T-cell (primary cell): ENCODE measurements at regions of chr20 and their contacts with region 1.

Region 1: GRCh38 chr20:43460172-43460829 is 2.6 kb downstream of the SRSF6 start:
- DNase-seq: no peak
- ATAC-seq: no peak
- H3K4me3 ChIP-seq: no peak overlapping the region
- H3K4me3 Mint-ChIP-seq: peak overlapping the region; percentile 34 to 97 (median 35)
- H3K27ac ChIP-seq: no peak overlapping the region
- H3K27ac Mint-ChIP-seq: peak overlapping the region in 1 of 2 donors; percentile 66
- H3K4me1 ChIP-seq: peaks cover 18% of the 10 kb centered on the region in 2 experiments
- H3K4me1 Mint-ChIP-seq: peaks cover 53 to 55% (median 54%) of the 10 kb centered on the region in 3 donors
- H3K27me3 ChIP-seq: peaks cover 0 to 11% of the 10 kb centered on the region in 2 experiments
- H3K27me3 Mint-ChIP-seq: peaks cover 0 to under 1% of the 10 kb centered on the region in 2 donors

Region 2: DNA sequence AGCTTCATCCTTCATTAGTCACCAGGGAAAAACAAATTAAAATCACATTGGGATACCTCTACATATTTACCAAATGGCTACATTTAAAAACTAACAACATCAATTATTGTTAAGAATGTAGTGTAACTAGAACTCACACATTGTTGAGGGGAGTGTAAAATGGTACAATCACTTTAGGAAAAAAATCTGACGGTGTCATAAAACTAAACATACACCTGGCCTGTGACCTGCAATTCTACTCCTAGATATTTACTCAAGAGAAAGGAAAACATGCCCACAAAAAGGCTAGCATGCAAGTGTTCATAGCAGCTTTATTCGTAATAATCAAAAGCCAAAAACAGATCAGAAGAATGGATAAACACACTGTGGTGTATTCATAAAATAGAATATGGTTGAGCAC is 35.9 kb before region 1 on chr20:
- CTCF ChIA-PET with region 1: no interaction called
- POLR2A ChIA-PET with region 1: no interaction called
- DNase-seq: no peak
- ATAC-seq: no peak
- H3K4me3 ChIP-seq: no peak overlapping the region
- H3K4me3 Mint-ChIP-seq: no peak overlapping the region
- H3K27ac ChIP-seq: no peak overlapping the region
- H3K27ac Mint-ChIP-seq: no peak overlapping the region
- H3K4me1 ChIP-seq: no peaks in the 10 kb centered on the region
- H3K4me1 Mint-ChIP-seq: no peaks in the 10 kb centered on the region
- H3K27me3 ChIP-seq: peaks cover 0 to 13% of the 10 kb centered on the region in 2 experiments
- H3K27me3 Mint-ChIP-seq: peaks cover 21 to 25% of the 10 kb centered on the region in 2 donors

Region 3: GRCh38 chr20:43941476-43942200 is 481.3 kb after region 1 on chr20:
- CTCF ChIA-PET with region 1: no interaction called
- POLR2A ChIA-PET with region 1: interaction called in 1 of 2 experiments, 18 read pairs
- DNase-seq: no peak
- ATAC-seq: no peak
- H3K4me3 ChIP-seq: no peak overlapping the region
- H3K4me3 Mint-ChIP-seq: peak overlapping the region in 1 of 3 donors; percentile 30
- H3K27ac ChIP-seq: no peak overlapping the region
- H3K27ac Mint-ChIP-seq: peak overlapping the region; percentile 49 to 88
- H3K4me1 ChIP-seq: peaks cover 71 to 80% of the 10 kb centered on the region in 2 experiments
- H3K4me1 Mint-ChIP-seq: peaks cover 64 to 75% (median 68%) of the 10 kb centered on the region in 3 donors
- H3K27me3 ChIP-seq: peaks cover 0 to 18% of the 10 kb centered on the region in 2 experiments
- H3K27me3 Mint-ChIP-seq: peaks cover 3 to 6% of the 10 kb centered on the region in 2 donors

Region 4: GRCh38 chr20:44431502-44432234 is 971.4 kb after region 1 on chr20:
- CTCF ChIA-PET with region 1: no interaction called
- POLR2A ChIA-PET with region 1: interaction called in 1 of 2 experiments, 12 read pairs
- DNase-seq: no peak
- ATAC-seq: no peak
- H3K4me3 ChIP-seq: no peak overlapping the region
- H3K4me3 Mint-ChIP-seq: no peak overlapping the region
- H3K27ac ChIP-seq: no peak overlapping the region
- H3K27ac Mint-ChIP-seq: no peak overlapping the region
- H3K4me1 ChIP-seq: no peaks in the 10 kb centered on the region
- H3K4me1 Mint-ChIP-seq: no peaks in the 10 kb centered on the region
- H3K27me3 ChIP-seq: peaks cover 0 to 22% of the 10 kb centered on the region in 2 experiments
- H3K27me3 Mint-ChIP-seq: peaks cover 3 to 8% of the 10 kb centered on the region in 2 donors

Region 5: GRCh38 chr20:45095753-45096371 is 1635.6 kb after region 1 on chr20:
- CTCF ChIA-PET with region 1: no interaction called
- POLR2A ChIA-PET with region 1: interaction called in 1 of 2 experiments, 12 read pairs
- DNase-seq: peak in 33 of 35 experiments; percentile 8 to 81 (median 45)
- ATAC-seq: peak; percentile 52 to 65 (median 56)
- H3K4me3 ChIP-seq: no peak overlapping the region
- H3K4me3 Mint-ChIP-seq: no peak overlapping the region
- H3K27ac ChIP-seq: no peak overlapping the region
- H3K27ac Mint-ChIP-seq: no peak overlapping the region
- H3K4me1 ChIP-seq: peaks cover 0 to 18% of the 10 kb centered on the region in 2 experiments
- H3K4me1 Mint-ChIP-seq: peaks cover 4 to 22% (median 18%) of the 10 kb centered on the region in 3 donors
- H3K27me3 ChIP-seq: peaks cover 14 to 33% of the 10 kb centered on the region in 2 experiments
- H3K27me3 Mint-ChIP-seq: peaks cover 29 to 39% of the 10 kb centered on the region in 2 donors